ENCODE measurements at regions of chr16 and their contacts with region 1.

Region 1: DNA sequence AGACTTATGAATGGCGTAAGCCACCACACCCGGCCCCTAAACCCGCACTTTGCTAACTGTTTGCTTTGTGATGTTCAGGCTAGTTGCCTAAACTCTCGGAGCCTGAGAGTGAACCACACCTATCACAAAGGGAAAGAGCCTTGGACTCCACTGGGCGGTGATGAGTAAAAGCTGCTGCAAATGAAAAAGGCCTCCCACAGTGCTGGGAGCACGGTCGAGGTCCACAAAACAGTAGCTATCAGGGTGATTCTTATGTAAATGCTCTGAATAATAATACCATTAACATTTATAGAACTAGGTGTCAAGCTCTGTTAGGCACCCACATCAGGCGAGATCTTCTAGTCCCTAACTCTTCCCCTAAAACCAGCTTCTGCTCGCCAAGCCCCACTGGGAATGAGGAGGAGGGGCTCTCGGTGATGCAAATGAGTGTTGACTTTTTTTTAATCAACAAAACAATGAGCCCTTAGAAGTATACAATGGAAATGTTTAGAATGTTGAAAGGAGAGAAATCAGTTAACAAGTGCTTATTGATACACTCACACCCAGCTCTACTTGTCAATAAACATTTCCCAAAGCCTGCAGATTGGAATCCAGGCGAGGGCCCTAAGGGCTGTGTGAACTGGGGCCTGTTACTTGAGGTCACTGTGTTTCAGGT is 19.8 kb downstream of the FBRS start:
- DNase-seq: no peak
- H3K4me3 ChIP-seq: no peak overlapping the region
- H3K27ac ChIP-seq: no peak overlapping the region
- H3K4me1 ChIP-seq: no peaks in the 10 kb centered on the region
- H3K27me3 ChIP-seq: no peaks in the 10 kb centered on the region
- CTCF ChIP-seq: no peak
- EP300 ChIP-seq: no peak
- RAD21 ChIP-seq: no peak

Region 2: DNA sequence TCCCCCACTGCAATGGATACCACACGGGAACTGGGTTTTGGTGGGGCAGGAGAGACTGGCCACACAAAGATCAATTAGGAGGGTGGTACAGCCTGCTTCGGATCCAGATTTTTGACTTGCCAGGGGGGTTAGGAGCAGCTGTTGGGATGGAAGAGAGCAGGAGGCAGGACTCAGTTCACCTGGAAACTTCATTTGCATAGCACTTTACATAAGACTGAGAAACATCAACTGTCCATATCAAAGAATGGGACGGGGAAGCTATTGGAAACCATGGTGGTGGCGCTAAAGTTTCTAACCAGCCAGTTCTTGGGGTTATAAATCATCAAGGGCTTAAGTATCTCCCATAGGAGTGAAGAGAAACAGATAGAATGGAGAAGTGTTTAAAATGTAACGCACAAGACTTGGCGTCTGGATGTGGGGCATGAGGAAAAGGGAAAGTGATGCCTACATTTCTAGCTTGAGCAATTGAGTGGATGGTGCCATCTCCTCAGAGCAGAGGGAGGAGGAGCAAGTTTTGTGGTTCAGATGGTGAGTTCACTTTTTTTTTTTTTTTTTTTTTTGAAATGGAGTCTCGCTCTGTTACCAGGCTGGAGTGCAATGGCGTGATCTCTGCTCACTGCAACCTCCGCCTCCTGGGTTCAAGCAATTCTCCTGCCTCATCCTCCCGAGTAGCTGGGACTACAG is 14.5 kb after region 1 on chr16:
- CTCF ChIA-PET with region 1: interaction called, 16 read pairs
- POLR2A ChIA-PET with region 1: no interaction called
- DNase-seq: no peak
- H3K4me3 ChIP-seq: no peak overlapping the region
- H3K27ac ChIP-seq: no peak overlapping the region
- H3K4me1 ChIP-seq: peaks cover 0 to 5% of the 10 kb centered on the region in 2 experiments; a peak in 1 of 4 replicates
- H3K27me3 ChIP-seq: no peaks in the 10 kb centered on the region
- CTCF ChIP-seq: no peak
- EP300 ChIP-seq: no peak
- RAD21 ChIP-seq: no peak

Measured in SK-N-SH (cell line).